Left cardiac atrium (tissue), 4 donors: ENCODE measurements at regions of chr5 and their contacts with region 1.

Region 1: GRCh38 chr5:141557681-141558136 is 61.1 kb downstream of the DIAPH1 start:
- DNase-seq: peak; percentile 90
- ATAC-seq: peak; percentile 83 to 90

Region 2: GRCh38 chr5:141412854-141413539 is 144.7 kb before region 1 on chr5 and contains the start of gene PCDHGA10:
- intact Hi-C with region 1: loop called (anchors 5 to 10 kb)
- DNase-seq: no peak
- ATAC-seq: peak; percentile 35 to 68
- total RNA-seq, gene PCDHGA10: 3.3 to 4.6 TPM

Region 3: DNA sequence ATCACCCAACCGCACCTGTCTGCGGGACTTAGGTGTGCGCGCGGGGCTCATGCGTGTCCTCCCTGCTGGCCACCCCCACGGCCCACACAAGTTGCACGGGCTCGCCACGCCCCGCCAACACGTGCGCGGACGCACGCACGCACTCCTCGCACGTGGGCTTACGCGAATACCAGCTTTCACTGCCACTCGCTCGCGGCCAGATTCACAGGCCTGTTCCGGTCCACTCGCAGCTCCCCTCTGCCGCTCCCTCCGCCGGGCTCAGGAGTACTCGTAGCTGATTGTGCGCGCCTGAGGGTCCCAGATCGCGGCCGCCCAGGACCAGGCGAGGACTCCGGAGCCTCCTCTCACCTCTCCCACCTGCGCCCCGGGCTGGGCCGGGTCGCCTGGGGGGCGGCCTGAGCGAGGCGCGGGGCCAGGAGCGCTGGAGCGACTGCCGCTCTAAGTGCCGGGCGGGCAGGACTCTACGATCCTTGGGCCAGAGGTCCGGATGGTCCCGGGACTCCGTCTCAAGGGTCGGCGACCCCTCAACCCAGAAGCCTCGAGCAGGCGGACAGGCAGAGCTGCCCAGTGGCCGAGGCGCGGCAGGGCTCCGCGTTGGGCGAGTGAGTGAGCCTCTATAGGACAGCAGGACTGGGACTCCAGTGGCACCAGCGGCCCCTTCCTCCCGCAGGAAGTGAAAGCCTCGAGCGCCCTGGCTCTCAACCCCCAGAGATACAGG is 65.4 kb before region 1 on chr5:
- intact Hi-C with region 1: no loop called
- DNase-seq: no peak
- ATAC-seq: peak; percentile 7 to 45